ENCODE measurements at regions of chr1 and their contacts with region 1.

Region 1: DNA sequence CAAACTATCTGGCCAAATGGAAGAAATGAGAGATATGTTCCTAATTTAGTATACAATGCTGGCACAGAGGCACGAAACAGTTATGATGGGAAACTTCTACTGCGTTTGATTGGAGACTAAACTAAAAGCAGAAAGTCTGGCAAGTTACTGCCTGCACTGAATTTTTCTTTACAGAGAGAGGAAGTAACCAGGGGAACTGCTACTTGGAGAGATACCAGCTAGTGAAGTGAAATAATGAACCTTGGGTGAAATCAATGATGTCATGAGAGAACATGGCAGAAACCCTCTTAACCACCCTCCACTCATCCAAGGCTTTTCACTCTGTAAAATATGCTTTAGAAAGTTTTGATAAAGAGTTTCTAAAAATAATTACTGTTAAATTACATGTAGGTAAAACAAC is 29.3 kb downstream of the NIBAN1 start:
- DNase-seq: peak; percentile 0
- H3K4me3 ChIP-seq: no peak overlapping the region
- H3K27ac ChIP-seq: peak overlapping the region; percentile 37 to 66 (median 42)
- H3K4me1 ChIP-seq: peaks cover 34 to 63% (median 53%) of the 10 kb centered on the region in 4 donors
- H3K27me3 ChIP-seq: no peaks in the 10 kb centered on the region
- CTCF ChIP-seq: no peak
- EP300 ChIP-seq: no peak
- POLR2A ChIP-seq: no peak

Region 2: GRCh38 chr1:184910691-184911091 is 34.3 kb before region 1 on chr1:
- intact Hi-C with region 1: loop called (anchors 5 kb)
- DNase-seq: no peak
- H3K4me3 ChIP-seq: no peak overlapping the region
- H3K27ac ChIP-seq: peak overlapping the region in 3 of 4 donors; percentile 28 to 73 (median 30)
- H3K4me1 ChIP-seq: peaks cover 52 to 96% (median 89%) of the 10 kb centered on the region in 4 donors
- H3K27me3 ChIP-seq: no peaks in the 10 kb centered on the region
- CTCF ChIP-seq: no peak
- EP300 ChIP-seq: no peak
- POLR2A ChIP-seq: no peak